ENCODE measurements at regions of chr6 and their contacts with region 1.

Region 1: DNA sequence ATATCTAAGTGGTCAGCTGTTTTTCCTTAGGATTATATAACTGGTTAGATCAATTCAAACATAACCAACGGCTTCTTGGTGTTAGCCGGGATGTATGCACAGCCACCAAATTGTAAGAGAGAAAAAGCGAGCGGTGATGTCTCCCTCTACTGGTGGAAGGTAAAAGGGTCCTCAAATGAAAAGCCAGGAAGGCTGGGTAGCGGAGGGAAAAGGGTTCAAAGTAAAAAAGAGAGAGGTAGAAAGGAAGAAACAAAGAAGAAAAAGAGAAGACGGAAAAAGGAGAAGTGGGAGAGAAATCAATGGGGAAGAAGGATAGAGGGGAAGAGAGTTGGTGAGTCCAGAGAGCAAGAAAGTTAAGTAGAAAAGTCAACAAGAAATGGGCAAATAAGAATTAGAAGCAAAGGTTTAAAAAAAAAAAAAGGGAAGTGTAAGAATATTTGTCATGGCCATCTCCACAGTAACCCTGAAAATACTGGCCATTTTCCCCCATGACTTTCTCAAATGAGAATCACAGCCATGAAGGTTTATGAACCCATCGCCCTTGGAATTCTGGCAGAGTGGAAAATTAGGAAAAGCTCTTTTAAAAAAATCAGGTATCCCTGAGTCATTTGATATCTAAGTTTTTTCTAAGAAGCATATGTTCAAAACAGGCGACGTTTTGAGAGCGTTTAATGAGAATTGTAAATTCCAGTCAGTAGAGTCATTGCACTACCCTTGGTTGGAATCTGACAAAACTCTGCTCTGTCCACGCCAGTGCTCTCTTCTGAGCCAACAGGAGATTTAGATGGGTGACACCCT is 155.6 kb upstream of the SNX9 start:
- DNase-seq: peak; percentile 56
- H3K4me3 ChIP-seq: no peak overlapping the region
- CTCF ChIP-seq: peak; percentile 69

Region 2: GRCh38 chr6:157323255-157323965 is 344.0 kb before region 1 on chr6 and contains the start of gene TMEM242:
- CTCF ChIA-PET with region 1: interaction called, 120 read pairs
- POLR2A ChIA-PET with region 1: interaction called, 10 read pairs
- DNase-seq: peak; percentile 69
- H3K4me3 ChIP-seq: peak within 1 kb of the TSS; percentile 83
- CTCF ChIP-seq: no peak

Region 3: DNA sequence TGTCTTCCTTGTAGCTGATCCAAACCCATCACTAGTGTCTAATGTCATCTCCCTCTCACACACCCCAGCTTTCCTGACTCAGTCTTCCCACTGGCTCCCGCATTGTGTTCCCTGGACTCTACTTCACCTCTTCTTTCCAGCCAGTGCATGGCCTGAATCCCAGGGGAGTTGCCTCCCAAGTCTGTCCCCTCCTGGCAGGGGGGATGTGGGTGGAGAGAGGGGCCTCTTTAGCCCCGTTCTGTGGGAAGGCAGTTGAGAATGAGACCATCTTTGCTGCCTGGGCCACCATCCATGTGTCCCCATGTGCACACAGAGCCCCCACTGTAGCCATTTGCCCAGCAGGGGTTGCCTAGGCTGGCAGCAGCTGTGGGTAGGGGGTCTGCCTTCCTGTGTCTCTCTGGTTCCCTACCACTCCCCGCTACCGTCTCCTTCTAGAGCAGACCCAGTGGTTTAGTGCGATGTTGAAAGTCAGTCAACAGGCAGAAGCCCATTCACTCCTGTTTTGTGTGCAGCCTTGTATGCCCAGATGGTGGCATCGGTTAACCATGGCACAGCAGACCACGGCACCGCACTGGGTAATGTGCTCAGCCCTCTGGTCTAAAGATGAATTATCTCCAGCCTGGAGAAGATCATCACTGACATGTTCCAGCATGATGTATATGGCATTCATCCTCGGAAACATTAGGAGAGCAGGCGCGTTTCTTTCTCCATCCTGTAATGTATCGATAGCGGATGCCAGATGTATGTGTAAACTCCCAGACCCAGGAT is 23.2 kb before region 1 on chr6:
- CTCF ChIA-PET with region 1: interaction called, 16 read pairs
- POLR2A ChIA-PET with region 1: no interaction called
- DNase-seq: no peak
- H3K4me3 ChIP-seq: no peak overlapping the region
- CTCF ChIP-seq: peak; percentile 55

Region 4: GRCh38 chr6:157682931-157683403 is 15.6 kb after region 1 on chr6:
- CTCF ChIA-PET with region 1: interaction called, 34 read pairs
- POLR2A ChIA-PET with region 1: interaction called, 3 read pairs
- DNase-seq: no peak
- H3K4me3 ChIP-seq: no peak overlapping the region
- CTCF ChIP-seq: no peak